MCF 10A (cell line): ENCODE measurements at regions of chr11 and their contacts with region 1.

Region 1: GRCh38 chr11:18321980-18322711 is at the starts of genes GTF2H1 and HPS5:
- DNase-seq: peak; percentile 99
- H3K4me3 Mint-ChIP-seq: peak within 1 kb of the TSS; percentile 92
- H3K27ac Mint-ChIP-seq: peak within 1 kb of the TSS; percentile 100
- H3K4me1 Mint-ChIP-seq: peaks cover 57% of the 10 kb centered on the region
- H3K27me3 Mint-ChIP-seq: no peaks in the 10 kb centered on the region
- CTCF ChIP-seq: no peak
- total RNA-seq, gene GTF2H1: 60.9 and 83.4 TPM in 2 replicates
- total RNA-seq, gene HPS5: 23.6 and 31.8 TPM in 2 replicates

Region 2: DNA sequence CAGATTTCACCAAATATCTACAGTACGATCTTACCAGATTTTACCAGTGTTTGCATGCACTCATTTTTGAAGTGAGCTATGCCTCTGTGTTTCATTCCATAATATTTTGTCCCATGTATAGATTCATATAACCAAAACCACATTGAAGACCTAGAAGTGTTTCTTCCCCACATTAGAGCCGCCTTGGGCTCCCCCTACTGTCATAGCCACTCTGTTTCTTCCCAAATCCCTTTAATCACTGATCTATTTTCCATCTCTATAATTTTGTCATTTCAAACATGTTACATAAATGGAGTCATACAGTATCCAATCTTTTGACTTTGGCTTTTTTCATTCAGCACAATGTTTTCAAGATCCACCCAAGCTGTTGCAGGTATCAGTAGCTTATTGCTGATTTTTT is 177.1 kb before region 1 on chr11:
- CTCF ChIA-PET with region 1: no interaction called
- POLR2A ChIA-PET with region 1: no interaction called
- intact Hi-C with region 1: no loop called
- DNase-seq: no peak
- H3K4me3 Mint-ChIP-seq: no peak overlapping the region
- H3K27ac Mint-ChIP-seq: no peak overlapping the region
- H3K4me1 Mint-ChIP-seq: peaks cover 11% of the 10 kb centered on the region
- H3K27me3 Mint-ChIP-seq: no peaks in the 10 kb centered on the region
- CTCF ChIP-seq: no peak

Region 3: GRCh38 chr11:18188796-18189195 is 133.3 kb before region 1 on chr11:
- CTCF ChIA-PET with region 1: no interaction called
- POLR2A ChIA-PET with region 1: no interaction called
- intact Hi-C with region 1: no loop called
- DNase-seq: no peak
- H3K4me3 Mint-ChIP-seq: no peak overlapping the region
- H3K27ac Mint-ChIP-seq: no peak overlapping the region
- H3K4me1 Mint-ChIP-seq: no peaks in the 10 kb centered on the region
- H3K27me3 Mint-ChIP-seq: peaks cover 63% of the 10 kb centered on the region
- CTCF ChIP-seq: no peak

Region 4: DNA sequence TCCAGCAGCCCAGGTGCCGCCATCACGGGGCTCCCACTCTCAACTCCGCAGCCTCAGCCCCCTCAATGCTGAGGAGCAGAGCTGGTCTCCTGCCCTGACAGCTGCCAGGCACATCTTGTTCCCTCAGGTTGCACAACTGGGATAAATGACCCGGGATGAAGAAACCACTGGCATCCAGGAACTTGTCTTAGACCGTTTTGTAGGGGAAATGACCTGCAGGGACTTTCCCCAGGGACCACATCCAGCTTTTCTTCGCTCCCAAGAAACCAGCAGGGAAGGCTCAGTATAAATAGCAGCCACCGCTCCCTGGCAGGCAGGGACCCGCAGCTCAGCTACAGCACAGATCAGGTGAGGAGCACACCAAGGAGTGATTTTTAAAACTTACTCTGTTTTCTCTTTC is 56.2 kb before region 1 on chr11 and contains the start of gene SAA1:
- CTCF ChIA-PET with region 1: interaction called, 3 read pairs
- POLR2A ChIA-PET with region 1: interaction called, 13 read pairs
- intact Hi-C with region 1: no loop called
- DNase-seq: peak; percentile 92
- H3K4me3 Mint-ChIP-seq: peak within 1 kb of the TSS; percentile 70
- H3K27ac Mint-ChIP-seq: peak within 1 kb of the TSS; percentile 37
- H3K4me1 Mint-ChIP-seq: peaks cover 30% of the 10 kb centered on the region
- H3K27me3 Mint-ChIP-seq: no peaks in the 10 kb centered on the region
- CTCF ChIP-seq: no peak
- total RNA-seq, gene SAA1: 45.5 and 55.7 TPM in 2 replicates

Region 5: DNA sequence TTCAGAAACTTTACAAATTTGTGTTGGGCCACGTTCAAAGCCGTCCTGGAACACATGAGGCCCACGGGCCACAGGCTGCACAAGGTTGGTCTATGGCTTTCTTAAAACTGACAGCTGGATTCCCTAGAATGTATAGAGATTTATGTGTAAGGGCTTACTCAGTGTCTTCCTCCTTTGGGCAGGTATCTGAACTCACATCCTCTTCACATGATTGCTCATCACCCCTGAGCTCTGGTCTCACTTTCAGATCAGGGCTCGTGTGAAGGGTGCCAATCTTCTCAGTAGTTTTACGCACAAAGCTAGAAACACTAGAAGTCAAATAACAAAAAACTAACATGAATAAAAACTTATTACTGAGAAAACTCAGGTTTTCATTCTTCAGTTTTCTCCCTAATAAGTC is 27.3 kb before region 1 on chr11:
- CTCF ChIA-PET with region 1: no interaction called
- POLR2A ChIA-PET with region 1: interaction called, 10 read pairs
- intact Hi-C with region 1: no loop called
- DNase-seq: no peak
- H3K4me3 Mint-ChIP-seq: no peak overlapping the region
- H3K27ac Mint-ChIP-seq: no peak overlapping the region
- H3K4me1 Mint-ChIP-seq: no peaks in the 10 kb centered on the region
- H3K27me3 Mint-ChIP-seq: no peaks in the 10 kb centered on the region
- CTCF ChIP-seq: no peak

Region 6: GRCh38 chr11:18310800-18311340 is 11.3 kb before region 1 on chr11:
- CTCF ChIA-PET with region 1: interaction called, 12 read pairs
- POLR2A ChIA-PET with region 1: interaction called, 239 read pairs
- intact Hi-C with region 1: no loop called
- DNase-seq: peak; percentile 88
- H3K4me3 Mint-ChIP-seq: peak overlapping the region; percentile 60
- H3K27ac Mint-ChIP-seq: peak overlapping the region; percentile 96
- H3K4me1 Mint-ChIP-seq: peaks cover 63% of the 10 kb centered on the region
- H3K27me3 Mint-ChIP-seq: no peaks in the 10 kb centered on the region
- CTCF ChIP-seq: no peak

Region 7: GRCh38 chr11:18383388-18384156 is 61.4 kb after region 1 on chr11:
- CTCF ChIA-PET with region 1: interaction called, 3 read pairs
- POLR2A ChIA-PET with region 1: interaction called, 66 read pairs
- intact Hi-C with region 1: no loop called
- DNase-seq: peak; percentile 100
- H3K4me3 Mint-ChIP-seq: peak overlapping the region; percentile 40
- H3K27ac Mint-ChIP-seq: peak overlapping the region; percentile 96
- H3K4me1 Mint-ChIP-seq: peaks cover 21% of the 10 kb centered on the region
- H3K27me3 Mint-ChIP-seq: no peaks in the 10 kb centered on the region
- CTCF ChIP-seq: no peak